ENCODE measurements at regions of chr1 and their contacts with region 1.

Region 1: GRCh38 chr1:94265906-94266305 is 28.5 kb upstream of the ARHGAP29 start:
- DNase-seq: peak; percentile 77
- H3K4me3 ChIP-seq: no peak overlapping the region
- H3K27ac ChIP-seq: peak overlapping the region; percentile 61
- H3K4me1 ChIP-seq: peaks cover 37% of the 10 kb centered on the region
- H3K27me3 ChIP-seq: no peaks in the 10 kb centered on the region
- CTCF ChIP-seq: no peak
- POLR2A ChIP-seq: no peak

Region 2: GRCh38 chr1:94247138-94248094 is 18.5 kb before region 1 on chr1:
- CTCF ChIA-PET with region 1: interaction called, 6 read pairs
- POLR2A ChIA-PET with region 1: interaction called, 11 read pairs
- dilution Hi-C with region 1: no loop called
- intact Hi-C with region 1: loop called (anchors 1 kb)
- DNase-seq: peak; percentile 80
- H3K4me3 ChIP-seq: peak overlapping the region; percentile 58 to 98 (median 75)
- H3K27ac ChIP-seq: peak overlapping the region; percentile 90
- H3K4me1 ChIP-seq: peaks cover 23% of the 10 kb centered on the region
- H3K27me3 ChIP-seq: no peaks in the 10 kb centered on the region
- CTCF ChIP-seq: no peak
- POLR2A ChIP-seq: peak; percentile 95

Region 3: GRCh38 chr1:94284476-94284875 is 18.6 kb after region 1 on chr1:
- CTCF ChIA-PET with region 1: interaction called, 3 read pairs
- POLR2A ChIA-PET with region 1: interaction called, 3 read pairs
- dilution Hi-C with region 1: no loop called
- intact Hi-C with region 1: loop called (anchors 2 kb)
- DNase-seq: no peak
- H3K4me3 ChIP-seq: no peak overlapping the region
- H3K27ac ChIP-seq: peak overlapping the region; percentile 47
- H3K4me1 ChIP-seq: peaks cover 45% of the 10 kb centered on the region
- H3K27me3 ChIP-seq: no peaks in the 10 kb centered on the region
- CTCF ChIP-seq: no peak
- POLR2A ChIP-seq: no peak